GM10248 (cell line): ENCODE measurements at regions of chr18 and their contacts with region 1.

Region 1: DNA sequence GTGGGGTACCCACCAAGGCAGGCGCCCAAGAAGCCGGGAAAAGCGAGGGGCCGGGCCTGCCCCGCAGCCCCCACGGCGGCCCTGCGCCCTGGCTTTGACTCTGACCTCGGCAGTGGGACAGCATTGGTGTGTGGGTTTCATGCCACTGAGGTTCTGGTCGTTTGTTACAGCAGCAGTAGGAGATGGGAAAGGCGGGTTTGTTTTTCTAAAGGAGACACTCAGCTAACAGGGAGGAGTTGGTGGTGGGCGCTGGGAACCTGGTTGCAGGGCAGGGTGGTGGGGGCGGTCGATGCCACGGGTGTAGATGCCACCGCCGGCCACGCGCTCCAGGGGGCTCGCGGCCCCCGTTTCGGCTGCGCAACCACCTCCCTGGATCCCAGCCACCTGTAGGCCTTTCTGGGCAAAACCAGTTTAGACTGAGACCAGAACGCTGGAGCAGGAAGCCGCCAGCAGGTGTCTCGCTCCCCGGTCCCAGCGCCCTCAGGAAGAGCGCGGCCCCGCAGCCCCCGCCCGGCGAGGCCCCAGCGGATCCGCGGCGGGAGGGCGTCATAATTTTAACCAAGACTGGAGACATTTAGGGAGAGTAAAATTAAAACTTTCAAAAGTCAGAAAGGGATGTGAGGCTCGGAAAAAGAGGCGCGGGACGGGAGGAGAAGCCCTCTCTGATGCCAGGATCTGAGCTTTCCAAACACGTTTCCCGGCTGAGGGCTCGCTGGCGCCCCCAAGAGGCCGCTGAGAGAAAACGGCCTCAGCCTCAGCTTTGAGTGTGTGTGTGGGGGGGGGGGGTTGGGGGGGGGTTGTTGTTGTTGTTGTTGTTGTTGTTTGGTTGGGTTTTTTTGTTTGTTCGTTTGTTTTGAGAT is 17.4 kb downstream of the CIDEA start:
- DNase-seq: peak; percentile 83
- CTCF ChIP-seq: peak; percentile 69

Region 2: GRCh38 chr18:12255626-12256026 is 16.0 kb before region 1 on chr18:
- CTCF ChIA-PET with region 1: interaction called, 13 read pairs
- POLR2A ChIA-PET with region 1: no interaction called
- DNase-seq: no peak
- CTCF ChIP-seq: no peak

Region 3: DNA sequence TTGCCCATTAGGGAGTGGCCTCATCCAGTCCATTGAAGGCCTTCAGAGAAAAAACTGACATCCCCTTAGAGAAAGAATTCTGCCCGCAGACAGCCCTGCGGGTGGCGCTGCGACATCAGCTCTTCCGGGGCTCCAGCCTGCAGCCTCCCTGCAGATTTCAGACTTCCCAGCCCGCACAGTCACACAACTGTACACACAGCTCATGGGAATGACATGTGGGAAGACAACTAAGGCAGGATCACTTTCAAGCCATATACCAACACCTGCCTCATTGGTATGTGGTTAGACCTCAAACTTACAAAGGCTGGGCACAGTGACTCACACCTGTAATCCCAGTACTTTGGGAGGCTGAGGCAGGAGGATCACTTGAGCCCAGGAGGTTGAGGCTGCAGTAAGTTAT is 11.7 kb after region 1 on chr18:
- CTCF ChIA-PET with region 1: interaction called, 35 read pairs
- POLR2A ChIA-PET with region 1: no interaction called
- DNase-seq: no peak
- CTCF ChIP-seq: no peak

Region 4: GRCh38 chr18:12552884-12553242 is 281.3 kb after region 1 on chr18:
- CTCF ChIA-PET with region 1: no interaction called
- POLR2A ChIA-PET with region 1: no interaction called
- DNase-seq: no peak
- CTCF ChIP-seq: no peak